Esophagus squamous epithelium (tissue), 5 donors: ENCODE measurements at regions of chr17 and their contacts with region 1.

Region 1: DNA sequence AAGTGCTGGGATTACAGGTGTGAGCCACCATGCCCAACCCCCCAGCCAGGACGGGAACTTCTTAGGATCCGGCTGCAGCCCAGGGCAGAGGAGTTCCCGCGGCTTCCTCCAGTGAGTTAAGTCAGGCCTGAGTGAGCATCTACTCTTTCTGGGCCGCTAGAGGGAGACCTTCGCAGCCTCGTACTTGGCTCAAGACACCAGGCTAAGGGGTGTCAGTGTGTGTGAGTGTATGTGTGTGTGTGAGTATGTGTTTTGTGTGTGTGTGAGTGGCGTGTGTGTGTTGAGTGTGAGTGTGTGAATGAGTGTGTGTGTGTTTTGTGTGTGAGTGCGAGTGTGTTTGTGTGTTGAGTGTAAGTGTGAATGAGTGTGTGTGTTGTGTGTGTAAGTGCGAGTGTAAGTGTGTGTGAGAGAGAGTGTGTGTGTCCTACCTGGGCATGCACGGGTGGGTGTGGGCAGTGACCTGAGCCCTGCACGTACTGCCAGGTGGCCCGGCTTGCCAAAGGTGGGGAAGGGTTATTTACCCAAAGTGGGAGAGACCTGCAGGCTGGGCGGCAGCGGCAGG is 58.5 kb downstream of the TMEM235 start:
- DNase-seq: no peak
- H3K4me3 ChIP-seq: no peak overlapping the region
- H3K27ac ChIP-seq: no peak overlapping the region
- H3K4me1 ChIP-seq: peaks cover 0 to 17% (median 2%) of the 10 kb centered on the region in 3 donors
- H3K27me3 ChIP-seq: no peaks in the 10 kb centered on the region
- CTCF ChIP-seq: peak; percentile 58 to 90 (median 82)
- POLR2A ChIP-seq: no peak

Region 2: DNA sequence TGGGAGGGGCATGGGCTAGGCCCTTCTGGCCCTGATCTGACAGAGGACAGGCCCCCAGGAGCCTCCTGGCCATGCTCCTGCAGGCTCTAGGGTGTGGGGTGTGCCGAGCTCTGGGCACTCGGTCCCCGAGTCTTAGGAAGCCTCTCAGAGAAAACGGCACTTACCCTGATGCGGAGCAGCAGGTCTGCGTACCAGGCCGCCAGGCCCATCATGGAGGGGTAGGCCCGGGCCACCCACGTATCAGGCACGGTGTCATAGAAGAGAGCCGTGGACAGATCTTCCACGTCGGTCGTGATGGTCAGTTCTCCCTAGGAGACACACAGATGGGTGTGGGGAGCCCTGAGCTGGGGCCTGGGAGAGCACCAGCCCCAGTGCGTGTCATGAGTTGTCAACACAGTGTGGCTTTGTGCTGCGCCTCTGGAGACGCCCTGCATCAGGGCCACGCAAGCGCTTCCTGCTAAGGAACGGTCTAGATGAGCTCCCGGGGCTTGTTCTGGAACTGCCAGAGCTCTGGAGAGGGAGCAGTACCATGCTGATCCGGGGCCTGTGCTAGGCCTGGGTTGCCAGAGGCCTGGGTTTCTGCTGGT is 136.5 kb after region 1 on chr17:
- intact Hi-C with region 1: loop called (anchors 5 kb)
- DNase-seq: no peak
- H3K4me3 ChIP-seq: no peak overlapping the region
- H3K27ac ChIP-seq: no peak overlapping the region
- H3K4me1 ChIP-seq: peaks cover 6 to 39% (median 23%) of the 10 kb centered on the region in 3 donors
- H3K27me3 ChIP-seq: no peaks in the 10 kb centered on the region
- CTCF ChIP-seq: no peak
- POLR2A ChIP-seq: no peak